ENCODE measurements at regions of chr17 and their contacts with region 1.

Region 1: GRCh38 chr17:6138761-6139446 is 68.7 kb downstream of the WSCD1 start:
- DNase-seq: no peak
- ATAC-seq: no peak
- H3K4me3 Mint-ChIP-seq: no peak overlapping the region
- H3K27ac Mint-ChIP-seq: no peak overlapping the region
- H3K4me1 Mint-ChIP-seq: no peaks in the 10 kb centered on the region
- H3K27me3 Mint-ChIP-seq: peaks cover 9% of the 10 kb centered on the region
- CTCF ChIP-seq: no peak

Region 2: GRCh38 chr17:7234083-7234951 is 1095.4 kb after region 1 on chr17 and contains the start of gene DVL2:
- CTCF ChIA-PET with region 1: no interaction called
- POLR2A ChIA-PET with region 1: interaction called, 10 read pairs
- intact Hi-C with region 1: no loop called
- DNase-seq: peak; percentile 93
- ATAC-seq: peak; percentile 47
- H3K4me3 Mint-ChIP-seq: peak within 1 kb of the TSS; percentile 86
- H3K27ac Mint-ChIP-seq: peak within 1 kb of the TSS; percentile 88
- H3K4me1 Mint-ChIP-seq: peaks cover 51% of the 10 kb centered on the region
- H3K27me3 Mint-ChIP-seq: no peaks in the 10 kb centered on the region
- CTCF ChIP-seq: no peak
- total RNA-seq, gene DVL2: 56.1 and 64.6 TPM in 2 replicates

Measured in activated B cell treated with CpG ODN at 0.5 μM for 24 hours (primary cell).